Activated CD8-positive, alpha-beta T cell treated with anti-CD3 and anti-CD28 coated beads, Interleukin-2, amount 10 ng/mL, durations not matched to agents 7 days and 5 days (primary cell): ENCODE measurements at regions of chr1 and their contacts with region 1.

Region 1: GRCh38 chr1:109984456-109985275 is at the start of gene AHCYL1:
- DNase-seq: peak; percentile 100
- ATAC-seq: peak; percentile 98
- H3K4me3 Mint-ChIP-seq: peak within 1 kb of the TSS; percentile 100
- H3K27ac Mint-ChIP-seq: peak within 1 kb of the TSS; percentile 97
- H3K4me1 Mint-ChIP-seq: peaks cover 38% of the 10 kb centered on the region
- H3K27me3 Mint-ChIP-seq: no peaks in the 10 kb centered on the region
- total RNA-seq, gene AHCYL1: 55.0 to 64.5 TPM

Region 2: GRCh38 chr1:109649491-109649914 is 335.2 kb before region 1 on chr1:
- CTCF ChIA-PET with region 1: interaction called, 42 read pairs
- POLR2A ChIA-PET with region 1: interaction called, 6 read pairs
- DNase-seq: no peak
- ATAC-seq: no peak
- H3K4me3 Mint-ChIP-seq: no peak overlapping the region
- H3K27ac Mint-ChIP-seq: no peak overlapping the region
- H3K4me1 Mint-ChIP-seq: no peaks in the 10 kb centered on the region
- H3K27me3 Mint-ChIP-seq: peaks cover 32% of the 10 kb centered on the region

Region 3: GRCh38 chr1:109773146-109773899 is 211.3 kb before region 1 on chr1:
- CTCF ChIA-PET with region 1: interaction called, 1,017 read pairs
- POLR2A ChIA-PET with region 1: interaction called, 32 read pairs
- DNase-seq: peak; percentile 85
- ATAC-seq: peak; percentile 90
- H3K4me3 Mint-ChIP-seq: no peak overlapping the region
- H3K27ac Mint-ChIP-seq: no peak overlapping the region
- H3K4me1 Mint-ChIP-seq: peaks cover 27% of the 10 kb centered on the region
- H3K27me3 Mint-ChIP-seq: peaks cover 10% of the 10 kb centered on the region

Region 4: GRCh38 chr1:109904105-109904817 is 80.4 kb before region 1 on chr1:
- CTCF ChIA-PET with region 1: interaction called, 21 read pairs
- POLR2A ChIA-PET with region 1: no interaction called
- DNase-seq: no peak
- ATAC-seq: no peak
- H3K4me3 Mint-ChIP-seq: no peak overlapping the region
- H3K27ac Mint-ChIP-seq: peak overlapping the region; percentile 32
- H3K4me1 Mint-ChIP-seq: peaks cover 61% of the 10 kb centered on the region
- H3K27me3 Mint-ChIP-seq: no peaks in the 10 kb centered on the region

Region 5: DNA sequence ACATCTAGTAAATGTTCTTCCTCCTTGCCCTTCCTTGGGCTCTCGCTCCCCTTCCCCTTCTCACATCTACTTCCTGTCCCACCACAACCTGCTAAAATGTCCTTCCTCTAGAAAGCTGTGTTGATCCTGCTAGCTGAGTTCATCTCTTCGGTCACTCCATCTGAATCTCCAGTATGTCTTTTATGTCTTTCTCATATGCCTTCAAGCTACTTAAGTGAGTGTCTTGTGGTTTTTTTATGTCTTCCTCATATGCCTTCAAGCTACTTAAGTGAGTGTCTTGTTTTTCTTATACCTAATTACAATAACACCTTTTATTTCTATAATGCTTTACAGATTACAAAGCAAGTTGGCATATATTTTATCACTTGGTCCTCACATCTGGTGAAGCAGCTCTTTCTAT is 40.1 kb before region 1 on chr1:
- CTCF ChIA-PET with region 1: interaction called, 17 read pairs
- POLR2A ChIA-PET with region 1: no interaction called
- DNase-seq: no peak
- ATAC-seq: no peak
- H3K4me3 Mint-ChIP-seq: no peak overlapping the region
- H3K27ac Mint-ChIP-seq: peak overlapping the region; percentile 7
- H3K4me1 Mint-ChIP-seq: peaks cover 6% of the 10 kb centered on the region
- H3K27me3 Mint-ChIP-seq: peaks cover 7% of the 10 kb centered on the region

Region 6: GRCh38 chr1:110034451-110035235 is 50.0 kb after region 1 on chr1 and contains the start of gene STRIP1:
- CTCF ChIA-PET with region 1: interaction called, 39 read pairs
- POLR2A ChIA-PET with region 1: interaction called, 4 read pairs
- DNase-seq: peak; percentile 96
- ATAC-seq: peak; percentile 92
- H3K4me3 Mint-ChIP-seq: peak within 1 kb of the TSS; percentile 82
- H3K27ac Mint-ChIP-seq: peak within 1 kb of the TSS; percentile 86
- H3K4me1 Mint-ChIP-seq: peaks cover 57% of the 10 kb centered on the region
- H3K27me3 Mint-ChIP-seq: no peaks in the 10 kb centered on the region
- total RNA-seq, gene STRIP1: 33.2 to 35.9 TPM

Region 7: DNA sequence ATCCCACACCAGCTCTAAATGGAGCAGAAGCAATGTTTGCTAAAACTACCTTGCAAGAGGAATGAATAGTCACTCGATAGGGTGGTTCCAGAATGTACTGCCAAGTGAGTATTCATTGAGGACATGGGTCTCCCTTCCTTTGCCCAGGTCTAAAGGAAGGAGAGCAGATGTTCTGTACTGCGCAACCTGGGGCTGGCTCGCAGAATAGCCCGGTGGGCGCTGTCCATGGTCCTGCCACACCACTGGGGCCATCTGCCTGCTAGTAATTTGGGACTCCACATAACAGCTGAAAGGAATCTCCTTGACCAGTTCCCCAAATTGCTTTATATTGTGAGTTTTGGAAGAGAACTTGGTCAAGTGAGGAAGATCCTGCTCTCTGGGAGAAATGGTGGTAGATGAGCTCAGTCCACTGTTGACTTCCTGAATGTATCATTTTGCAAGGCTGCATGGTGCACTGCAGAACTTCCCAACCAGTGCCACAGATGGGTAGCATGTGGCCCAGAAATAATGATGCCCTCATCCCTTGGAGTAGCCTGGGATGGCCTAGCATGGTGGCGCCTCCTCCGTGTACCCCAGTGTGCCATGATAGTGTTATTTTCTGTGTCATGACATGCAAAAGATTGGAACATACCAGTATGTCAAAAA is 171.3 kb after region 1 on chr1:
- CTCF ChIA-PET with region 1: no interaction called
- POLR2A ChIA-PET with region 1: no interaction called
- DNase-seq: peak; percentile 70
- ATAC-seq: peak; percentile 71
- H3K4me3 Mint-ChIP-seq: no peak overlapping the region
- H3K27ac Mint-ChIP-seq: no peak overlapping the region
- H3K4me1 Mint-ChIP-seq: peaks cover 9% of the 10 kb centered on the region
- H3K27me3 Mint-ChIP-seq: peaks cover 36% of the 10 kb centered on the region

Region 8: GRCh38 chr1:110524311-110525251 is 539.9 kb after region 1 on chr1:
- CTCF ChIA-PET with region 1: no interaction called
- POLR2A ChIA-PET with region 1: no interaction called
- DNase-seq: peak; percentile 73
- ATAC-seq: peak; percentile 77
- H3K4me3 Mint-ChIP-seq: no peak overlapping the region
- H3K27ac Mint-ChIP-seq: no peak overlapping the region
- H3K4me1 Mint-ChIP-seq: peaks cover 1% of the 10 kb centered on the region
- H3K27me3 Mint-ChIP-seq: peaks cover 38% of the 10 kb centered on the region